Activated CD4-positive, alpha-beta T cell treated with anti-CD3 and anti-CD28 coated beads for 36 hours (primary cell): ENCODE measurements at regions of chr6 and their contacts with region 1.

Region 1: GRCh38 chr6:33585403-33586107 is 5.5 kb upstream of the BAK1 start:
- DNase-seq: peak; percentile 93
- ATAC-seq: peak; percentile 85
- H3K4me3 Mint-ChIP-seq: peak overlapping the region; percentile 66
- H3K27ac Mint-ChIP-seq: peak overlapping the region; percentile 92
- H3K4me1 Mint-ChIP-seq: peaks cover 22% of the 10 kb centered on the region
- H3K27me3 Mint-ChIP-seq: no peaks in the 10 kb centered on the region

Region 2: DNA sequence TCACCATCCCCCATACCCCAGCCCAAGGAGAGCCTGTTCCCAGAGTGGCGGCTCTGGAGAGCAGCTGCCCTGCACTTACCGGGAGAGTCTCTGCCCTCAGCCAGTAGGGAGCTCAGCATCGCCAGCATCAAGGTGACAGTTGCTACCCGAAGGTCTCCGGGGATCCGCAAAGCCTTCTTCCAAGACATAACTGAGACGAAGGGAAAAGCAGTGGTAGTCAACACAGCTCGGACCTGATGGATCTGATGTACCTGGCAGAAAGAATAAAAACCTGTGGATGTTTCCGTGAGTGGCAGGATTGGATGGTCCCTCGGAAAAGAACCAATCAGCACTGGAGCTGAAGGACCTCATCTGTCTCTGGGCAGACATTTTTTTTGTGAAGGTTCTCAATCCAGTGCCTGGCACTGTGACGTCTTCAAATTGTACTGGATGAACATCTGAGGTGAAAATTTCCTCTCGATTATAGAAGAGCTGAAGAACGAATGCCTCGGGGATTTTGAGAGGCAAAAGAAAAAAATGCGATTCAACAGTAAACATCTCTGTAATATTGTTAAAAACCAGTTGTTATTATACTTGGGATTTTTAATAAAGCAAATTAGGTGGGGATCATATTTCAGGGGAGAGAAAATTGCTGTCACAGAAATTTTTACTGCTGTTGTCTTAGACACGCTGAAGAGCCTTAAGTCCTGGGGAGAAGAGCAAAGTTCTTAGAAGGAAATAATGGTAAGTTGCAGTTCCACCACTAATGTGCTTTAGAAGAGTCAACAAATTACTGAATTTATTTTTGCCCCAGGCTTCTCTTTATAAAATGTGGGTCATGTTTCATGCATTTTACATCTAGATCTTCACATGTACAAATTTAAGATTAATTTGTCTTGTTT is 918.9 kb before region 1 on chr6 and contains the start of gene HLA-DQB1:
- CTCF ChIA-PET with region 1: no interaction called
- POLR2A ChIA-PET with region 1: no interaction called
- intact Hi-C with region 1: no loop called
- DNase-seq: peak; percentile 60
- ATAC-seq: peak; percentile 81
- H3K4me3 Mint-ChIP-seq: peak within 1 kb of the TSS; percentile 68
- H3K27ac Mint-ChIP-seq: peak within 1 kb of the TSS; percentile 58
- H3K4me1 Mint-ChIP-seq: peaks cover 44% of the 10 kb centered on the region
- H3K27me3 Mint-ChIP-seq: peaks cover 18% of the 10 kb centered on the region
- total RNA-seq, gene HLA-DQB1: 2.3 to 3.1 TPM

Region 3: DNA sequence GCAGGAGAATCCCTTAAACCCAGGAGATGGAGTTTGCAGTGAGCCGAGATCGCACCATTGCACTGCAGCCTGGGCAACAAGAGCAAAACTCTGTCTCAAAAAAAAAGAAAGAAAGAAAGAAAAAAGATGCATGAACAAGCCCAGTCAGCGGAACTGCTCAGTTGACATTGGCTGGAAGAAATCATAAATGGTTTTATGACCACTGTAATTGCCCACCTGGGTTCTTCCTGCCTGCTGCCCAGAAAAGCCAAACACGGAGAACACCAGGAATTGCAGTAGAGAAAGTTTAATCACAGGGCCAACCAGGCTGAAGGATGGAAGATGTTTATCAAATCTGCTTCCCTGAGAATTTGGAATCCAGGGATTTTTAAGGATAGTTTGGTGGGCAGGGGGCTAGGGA is 28.2 kb before region 1 on chr6:
- CTCF ChIA-PET with region 1: no interaction called
- POLR2A ChIA-PET with region 1: no interaction called
- intact Hi-C with region 1: no loop called
- DNase-seq: no peak
- ATAC-seq: no peak
- H3K4me3 Mint-ChIP-seq: no peak overlapping the region
- H3K27ac Mint-ChIP-seq: no peak overlapping the region
- H3K4me1 Mint-ChIP-seq: peaks cover 3% of the 10 kb centered on the region
- H3K27me3 Mint-ChIP-seq: no peaks in the 10 kb centered on the region

Region 4: DNA sequence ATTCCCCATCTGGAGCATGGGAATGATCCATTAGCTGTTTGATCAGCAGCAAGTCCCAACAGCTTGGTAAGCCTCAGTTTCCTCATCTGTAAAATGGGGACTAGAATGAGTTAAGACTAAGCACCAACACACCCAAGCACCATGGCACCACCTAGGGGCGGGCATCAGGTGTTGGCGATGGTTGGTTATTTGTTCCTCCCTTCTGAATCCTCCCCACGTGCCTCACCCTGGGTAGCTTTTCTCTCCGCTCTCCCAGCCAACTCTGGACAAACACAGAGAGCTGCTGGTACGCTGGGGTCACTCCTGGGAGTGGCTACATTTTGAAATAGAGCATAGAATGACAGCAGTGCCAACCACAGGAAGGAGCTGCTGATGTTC is 22.2 kb after region 1 on chr6:
- CTCF ChIA-PET with region 1: interaction called, 13 read pairs
- POLR2A ChIA-PET with region 1: no interaction called
- intact Hi-C with region 1: loop called in 1 of 2 experiments (anchors 1 kb)
- DNase-seq: peak; percentile 76
- ATAC-seq: peak; percentile 88
- H3K4me3 Mint-ChIP-seq: no peak overlapping the region
- H3K27ac Mint-ChIP-seq: no peak overlapping the region
- H3K4me1 Mint-ChIP-seq: no peaks in the 10 kb centered on the region
- H3K27me3 Mint-ChIP-seq: peaks cover 2% of the 10 kb centered on the region

Region 5: DNA sequence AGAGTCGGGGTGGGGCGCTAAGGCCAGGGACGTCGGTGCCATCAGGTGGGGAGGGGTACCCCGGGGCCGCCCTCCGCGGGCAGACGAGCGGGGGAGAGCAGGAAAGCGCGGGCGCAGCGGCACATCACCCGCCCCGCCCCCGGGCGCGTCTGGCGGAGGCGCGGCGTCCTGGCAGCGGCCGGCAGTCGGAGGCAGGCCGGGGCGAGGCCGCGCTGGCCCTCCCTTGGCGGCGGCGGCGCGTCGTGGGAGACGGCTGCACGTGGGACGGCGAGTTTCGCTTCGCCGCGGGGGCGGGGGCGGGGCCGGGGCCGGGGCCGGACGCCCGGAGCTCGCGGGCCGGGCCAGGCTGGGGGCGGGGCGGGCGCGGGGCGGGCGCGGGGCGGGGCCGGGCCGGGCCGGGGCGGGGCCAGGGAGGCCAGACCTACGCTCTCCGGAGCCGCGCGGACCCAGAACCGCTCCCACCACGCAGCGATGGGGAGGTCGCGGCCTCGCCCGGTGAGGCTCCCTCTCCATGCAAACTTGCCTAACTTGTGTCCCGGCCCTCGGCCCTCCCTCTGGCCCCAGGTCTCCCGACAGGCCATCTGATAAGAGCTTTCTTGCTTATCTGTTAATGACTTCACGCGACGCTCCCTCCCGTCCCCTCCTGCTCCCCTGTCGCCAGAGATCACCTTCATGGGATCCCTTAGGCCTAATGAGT is 48.1 kb after region 1 on chr6:
- CTCF ChIA-PET with region 1: interaction called, 4 read pairs
- POLR2A ChIA-PET with region 1: no interaction called
- intact Hi-C with region 1: loop called (anchors 1 to 2 kb)
- DNase-seq: peak; percentile 68
- ATAC-seq: peak; percentile 78
- H3K4me3 Mint-ChIP-seq: peak overlapping the region; percentile 71
- H3K27ac Mint-ChIP-seq: peak overlapping the region; percentile 42
- H3K4me1 Mint-ChIP-seq: peaks cover 64% of the 10 kb centered on the region
- H3K27me3 Mint-ChIP-seq: no peaks in the 10 kb centered on the region

Region 6: GRCh38 chr6:33700391-33701050 is 115.0 kb after region 1 on chr6:
- CTCF ChIA-PET with region 1: interaction called, 16 read pairs
- POLR2A ChIA-PET with region 1: interaction called, 3 read pairs
- intact Hi-C with region 1: loop called (anchors 1 to 2 kb)
- DNase-seq: peak; percentile 90
- ATAC-seq: peak; percentile 89
- H3K4me3 Mint-ChIP-seq: no peak overlapping the region
- H3K27ac Mint-ChIP-seq: peak overlapping the region; percentile 35
- H3K4me1 Mint-ChIP-seq: peaks cover 47% of the 10 kb centered on the region
- H3K27me3 Mint-ChIP-seq: no peaks in the 10 kb centered on the region

Region 7: DNA sequence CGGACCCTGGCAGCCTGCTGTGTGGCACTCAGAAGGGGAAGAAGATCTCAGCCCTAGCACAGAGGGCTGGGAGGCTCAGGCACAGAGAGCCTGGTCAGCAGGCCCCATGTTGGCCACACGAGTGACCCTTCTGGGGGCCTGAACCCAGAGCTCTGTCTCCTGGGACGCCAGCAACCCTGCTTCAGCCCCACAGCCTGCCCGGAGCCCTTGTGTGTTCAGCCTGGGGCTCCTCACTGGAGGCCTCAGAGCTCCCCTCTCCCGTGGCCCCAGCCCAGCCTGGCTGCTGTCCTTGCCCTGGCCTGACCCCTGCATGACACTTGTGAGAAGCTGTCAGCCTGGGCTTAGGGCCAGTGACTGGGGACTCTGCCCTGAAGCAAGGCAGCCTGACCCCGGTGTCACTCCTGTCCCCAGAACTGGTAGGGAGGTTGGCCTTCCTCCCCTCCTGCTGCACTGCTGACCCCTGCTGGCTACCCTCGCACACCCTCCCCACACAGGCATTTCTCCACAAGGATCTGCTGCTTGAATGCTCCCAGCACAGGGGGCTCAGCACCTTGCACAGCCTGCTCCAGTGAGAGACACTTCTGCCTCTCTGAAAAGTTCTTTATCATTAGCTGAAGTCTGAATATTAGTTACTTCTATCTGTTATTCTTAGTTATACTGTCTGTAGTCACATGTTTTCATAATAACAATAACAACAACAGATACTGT is 176.5 kb after region 1 on chr6:
- CTCF ChIA-PET with region 1: no interaction called
- POLR2A ChIA-PET with region 1: no interaction called
- intact Hi-C with region 1: loop called in 1 of 2 experiments (anchors 5 kb)
- DNase-seq: peak; percentile 75
- ATAC-seq: peak; percentile 85
- H3K4me3 Mint-ChIP-seq: no peak overlapping the region
- H3K27ac Mint-ChIP-seq: no peak overlapping the region
- H3K4me1 Mint-ChIP-seq: no peaks in the 10 kb centered on the region
- H3K27me3 Mint-ChIP-seq: no peaks in the 10 kb centered on the region